Heart left ventricle (tissue), 16 donors: ENCODE measurements at regions of chr17 and their contacts with region 1.

Region 1: GRCh38 chr17:57009737-57010445 is 32.0 kb downstream of the SCPEP1 start:
- DNase-seq: peak in 3 of 5 donors; percentile 20 to 43 (median 43)
- ATAC-seq: peak in 3 of 4 donors; percentile 60 to 84 (median 76)
- H3K4me3 ChIP-seq: no peak overlapping the region
- H3K27ac ChIP-seq: no peak overlapping the region
- H3K4me1 ChIP-seq: peaks cover 0 to 11% (median 0%) of the 10 kb centered on the region in 12 donors
- H3K27me3 ChIP-seq: no peaks in the 10 kb centered on the region
- CTCF ChIP-seq: peak; percentile 42 to 70 (median 58)
- POLR2A ChIP-seq: no peak

Region 2: GRCh38 chr17:56913864-56914640 is 95.8 kb before region 1 on chr17 and contains the start of gene TRIM25:
- intact Hi-C with region 1: no loop called
- DNase-seq: peak; percentile 92 to 95 (median 94)
- ATAC-seq: peak; percentile 92 to 96 (median 95)
- H3K4me3 ChIP-seq: peak within 1 kb of the TSS; percentile 68 to 98 (median 81)
- H3K27ac ChIP-seq: peak within 1 kb of the TSS; percentile 66 to 97 (median 92)
- H3K4me1 ChIP-seq: peaks cover 0 to 60% (median 31%) of the 10 kb centered on the region in 12 donors
- H3K27me3 ChIP-seq: no peaks in the 10 kb centered on the region
- CTCF ChIP-seq: no peak
- POLR2A ChIP-seq: peak; percentile 64 to 98
- total RNA-seq, gene TRIM25: 12.8 to 55.9 (median 18.8) TPM

Region 3: DNA sequence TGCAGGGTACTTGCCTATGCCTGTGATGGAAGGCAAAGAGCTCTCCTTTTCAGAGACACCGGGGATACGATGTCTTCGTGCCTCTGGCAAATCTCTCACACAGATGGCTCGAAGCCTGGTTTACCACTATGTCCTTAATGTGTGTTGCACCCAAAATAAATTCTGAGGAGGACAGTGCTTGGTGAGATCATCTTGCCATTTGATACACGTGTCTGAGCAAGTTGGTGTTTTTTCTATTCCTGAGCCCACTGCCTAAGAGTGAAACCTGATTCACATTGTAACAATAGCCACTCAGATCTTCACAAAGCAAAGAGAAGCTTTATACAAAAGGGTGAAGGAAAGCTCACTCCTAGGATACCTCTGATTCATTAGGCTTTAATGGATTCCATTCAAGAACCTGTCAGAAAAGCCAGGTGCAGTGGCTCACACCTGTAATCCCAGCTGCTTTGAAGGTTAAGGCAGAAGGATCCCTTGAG is 42.0 kb after region 1 on chr17:
- intact Hi-C with region 1: loop called in 1 of 10 experiments (anchors 5 kb)
- DNase-seq: peak in 1 of 5 donors; percentile 38
- ATAC-seq: peak; percentile 52 to 78 (median 69)
- H3K4me3 ChIP-seq: no peak overlapping the region
- H3K27ac ChIP-seq: peak overlapping the region in 6 of 12 donors; percentile 21 to 61 (median 42)
- H3K4me1 ChIP-seq: peaks cover 0 to 24% (median 5%) of the 10 kb centered on the region in 12 donors
- H3K27me3 ChIP-seq: peaks cover 0 to 6% (median 0%) of the 10 kb centered on the region in 9 donors
- CTCF ChIP-seq: no peak
- POLR2A ChIP-seq: no peak

Region 4: GRCh38 chr17:57068222-57068658 is 58.3 kb after region 1 on chr17:
- intact Hi-C with region 1: loop called in 1 of 10 experiments (anchors 10 kb)
- DNase-seq: no peak
- ATAC-seq: no peak
- H3K4me3 ChIP-seq: no peak overlapping the region
- H3K27ac ChIP-seq: no peak overlapping the region
- H3K4me1 ChIP-seq: peaks cover 0 to 7% (median 0%) of the 10 kb centered on the region in 12 donors
- H3K27me3 ChIP-seq: no peaks in the 10 kb centered on the region
- CTCF ChIP-seq: no peak
- POLR2A ChIP-seq: no peak

Region 5: GRCh38 chr17:57084802-57085447 is 75.0 kb after region 1 on chr17 and contains the start of gene AKAP1:
- intact Hi-C with region 1: loop called in 2 of 10 experiments (anchors 5 to 10 kb)
- DNase-seq: peak; percentile 96 to 99 (median 97)
- ATAC-seq: peak; percentile 89 to 95 (median 92)
- H3K4me3 ChIP-seq: peak within 1 kb of the TSS; percentile 63 to 98 (median 78)
- H3K27ac ChIP-seq: peak within 1 kb of the TSS; percentile 83 to 99 (median 95)
- H3K4me1 ChIP-seq: peaks cover 0 to 51% (median 27%) of the 10 kb centered on the region in 12 donors
- H3K27me3 ChIP-seq: no peaks in the 10 kb centered on the region
- CTCF ChIP-seq: peak in 11 of 12 donors; percentile 10 to 49 (median 30)
- POLR2A ChIP-seq: peak; percentile 31 to 95
- total RNA-seq, gene AKAP1: 77.4 to 240 (median 133) TPM

Region 6: GRCh38 chr17:57106107-57106835 is 96.4 kb after region 1 on chr17:
- intact Hi-C with region 1: loop called in 7 of 10 experiments (anchors 5 to 10 kb)
- DNase-seq: peak in 2 of 5 donors; percentile 44 to 59
- ATAC-seq: peak in 3 of 4 donors; percentile 24 to 50 (median 35)
- H3K4me3 ChIP-seq: no peak overlapping the region
- H3K27ac ChIP-seq: peak overlapping the region in 9 of 12 donors; percentile 15 to 96 (median 88)
- H3K4me1 ChIP-seq: peaks cover 6 to 91% (median 57%) of the 10 kb centered on the region in 12 donors
- H3K27me3 ChIP-seq: no peaks in the 10 kb centered on the region
- CTCF ChIP-seq: peak; percentile 15 to 57 (median 41)
- POLR2A ChIP-seq: no peak

Region 7: GRCh38 chr17:57114085-57114673 is 104.3 kb after region 1 on chr17:
- intact Hi-C with region 1: loop called in 7 of 10 experiments (anchors 5 to 10 kb)
- DNase-seq: peak in 1 of 5 donors; percentile 48
- ATAC-seq: no peak
- H3K4me3 ChIP-seq: no peak overlapping the region
- H3K27ac ChIP-seq: peak overlapping the region in 9 of 12 donors; percentile 2 to 96 (median 63)
- H3K4me1 ChIP-seq: peaks cover 6 to 67% (median 48%) of the 10 kb centered on the region in 12 donors
- H3K27me3 ChIP-seq: no peaks in the 10 kb centered on the region
- CTCF ChIP-seq: peak; percentile 71 to 94 (median 84)
- POLR2A ChIP-seq: no peak